ENCODE measurements at regions of chr2 and their contacts with region 1.

Region 1: GRCh38 chr2:36486546-36487044 is 111.4 kb downstream of the FEZ2 start:
- DNase-seq: no peak
- H3K4me3 Mint-ChIP-seq: no peak overlapping the region
- H3K27ac Mint-ChIP-seq: peak overlapping the region; percentile 83
- H3K4me1 Mint-ChIP-seq: peaks cover 65% of the 10 kb centered on the region
- H3K27me3 Mint-ChIP-seq: no peaks in the 10 kb centered on the region
- CTCF ChIP-seq: no peak

Region 2: GRCh38 chr2:36450466-36451196 is 36.0 kb before region 1 on chr2:
- CTCF ChIA-PET with region 1: no interaction called
- intact Hi-C with region 1: loop called (anchors 5 kb)
- DNase-seq: no peak
- H3K4me3 Mint-ChIP-seq: no peak overlapping the region
- H3K27ac Mint-ChIP-seq: no peak overlapping the region
- H3K4me1 Mint-ChIP-seq: peaks cover 27% of the 10 kb centered on the region
- H3K27me3 Mint-ChIP-seq: no peaks in the 10 kb centered on the region
- CTCF ChIP-seq: no peak